Activated CD4-positive, alpha-beta T cell treated with anti-CD3 and anti-CD28 coated beads for 36 hours (primary cell): ENCODE measurements at regions of chr1 and their contacts with region 1.

Region 1: GRCh38 chr1:206967096-206967849 is 3.0 kb downstream of the FCAMR start:
- DNase-seq: no peak
- ATAC-seq: peak; percentile 64
- H3K4me3 Mint-ChIP-seq: no peak overlapping the region
- H3K27ac Mint-ChIP-seq: peak overlapping the region; percentile 40
- H3K4me1 Mint-ChIP-seq: peaks cover 32% of the 10 kb centered on the region
- H3K27me3 Mint-ChIP-seq: no peaks in the 10 kb centered on the region

Region 2: GRCh38 chr1:205878026-205878425 is 1089.2 kb before region 1 on chr1:
- CTCF ChIA-PET with region 1: no interaction called
- POLR2A ChIA-PET with region 1: no interaction called
- intact Hi-C with region 1: no loop called
- DNase-seq: no peak
- ATAC-seq: no peak
- H3K4me3 Mint-ChIP-seq: no peak overlapping the region
- H3K27ac Mint-ChIP-seq: no peak overlapping the region
- H3K4me1 Mint-ChIP-seq: no peaks in the 10 kb centered on the region
- H3K27me3 Mint-ChIP-seq: peaks cover 8% of the 10 kb centered on the region

Region 3: GRCh38 chr1:206935491-206936067 is 31.7 kb before region 1 on chr1:
- CTCF ChIA-PET with region 1: interaction called, 17 read pairs
- POLR2A ChIA-PET with region 1: no interaction called
- intact Hi-C with region 1: no loop called
- DNase-seq: peak; percentile 79
- ATAC-seq: peak; percentile 76
- H3K4me3 Mint-ChIP-seq: no peak overlapping the region
- H3K27ac Mint-ChIP-seq: no peak overlapping the region
- H3K4me1 Mint-ChIP-seq: peaks cover 23% of the 10 kb centered on the region
- H3K27me3 Mint-ChIP-seq: no peaks in the 10 kb centered on the region